Calu3 (cell line): ENCODE measurements at regions of chr18 and their contacts with region 1.

Region 1: GRCh38 chr18:9683407-9684396 is 24.4 kb upstream of the RAB31 start:
- DNase-seq: peak; percentile 75
- H3K4me3 Mint-ChIP-seq: no peak overlapping the region
- H3K27ac Mint-ChIP-seq: no peak overlapping the region
- H3K4me1 Mint-ChIP-seq: peaks cover 14% of the 10 kb centered on the region
- H3K27me3 Mint-ChIP-seq: no peaks in the 10 kb centered on the region
- CTCF ChIP-seq: peak; percentile 48

Region 2: DNA sequence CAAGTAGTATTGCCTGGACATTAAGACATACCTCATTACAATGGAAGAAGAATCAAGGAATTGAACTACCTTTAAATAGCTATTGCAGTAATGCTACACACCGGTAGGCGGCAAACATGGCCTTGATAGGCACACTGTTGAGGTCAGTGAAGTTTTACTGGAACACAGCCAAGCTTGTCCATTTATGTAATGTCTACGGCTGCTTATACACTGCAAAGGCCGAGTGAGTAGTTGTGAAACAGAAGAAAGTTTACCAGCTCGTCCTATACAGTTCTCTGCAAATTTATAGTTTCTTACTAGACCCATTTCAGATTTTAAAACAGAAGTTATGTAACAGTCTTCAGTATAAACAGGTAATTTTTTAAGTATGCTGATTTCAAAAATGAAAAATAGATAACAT is 108.1 kb before region 1 on chr18:
- CTCF ChIA-PET with region 1: interaction called, 29 read pairs
- intact Hi-C with region 1: loop called (anchors 1 kb)
- DNase-seq: peak; percentile 84
- H3K4me3 Mint-ChIP-seq: no peak overlapping the region
- H3K27ac Mint-ChIP-seq: peak overlapping the region; percentile 42
- H3K4me1 Mint-ChIP-seq: peaks cover 12% of the 10 kb centered on the region
- H3K27me3 Mint-ChIP-seq: no peaks in the 10 kb centered on the region
- CTCF ChIP-seq: peak; percentile 84

Region 3: GRCh38 chr18:9612215-9612830 is 71.4 kb before region 1 on chr18:
- CTCF ChIA-PET with region 1: interaction called, 8 read pairs
- intact Hi-C with region 1: loop called (anchors 1 kb)
- DNase-seq: peak; percentile 56
- H3K4me3 Mint-ChIP-seq: peak overlapping the region; percentile 99
- H3K27ac Mint-ChIP-seq: peak overlapping the region; percentile 97
- H3K4me1 Mint-ChIP-seq: peaks cover 54% of the 10 kb centered on the region
- H3K27me3 Mint-ChIP-seq: no peaks in the 10 kb centered on the region
- CTCF ChIP-seq: peak; percentile 57

Region 4: DNA sequence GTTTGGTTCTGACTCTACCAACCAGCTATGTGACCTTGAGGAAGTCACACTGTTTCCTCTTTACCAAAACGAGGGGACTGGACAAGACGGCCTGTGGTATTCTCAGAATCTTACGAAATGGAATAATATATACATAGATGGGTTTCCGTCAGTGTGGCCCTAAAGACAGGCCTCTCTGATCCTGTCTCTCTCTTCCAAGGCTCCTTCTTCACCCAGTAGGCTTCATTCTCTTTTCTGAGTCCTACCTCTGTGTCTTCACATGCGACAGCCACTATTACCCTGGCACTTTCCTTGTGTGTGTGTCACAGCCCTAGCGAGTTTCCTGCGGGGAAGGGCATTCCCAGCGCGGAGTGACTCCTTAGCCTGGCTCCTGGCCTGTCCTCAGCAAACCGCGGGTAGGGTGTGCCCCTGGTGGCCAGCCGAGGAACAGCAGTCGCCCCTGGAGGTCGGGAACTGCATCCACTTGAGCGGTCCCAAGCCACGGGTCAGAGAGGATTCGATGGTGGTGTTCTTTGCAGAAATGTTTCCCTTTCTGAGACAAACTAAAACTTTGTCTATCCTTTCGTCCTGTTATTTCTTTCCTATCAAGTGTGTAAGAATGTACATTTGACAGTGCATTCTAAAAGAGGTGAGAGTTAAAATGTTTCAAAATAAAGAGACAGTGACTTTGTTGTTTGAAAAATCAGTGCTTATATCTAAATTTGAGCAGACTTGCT is 87.7 kb after region 1 on chr18:
- CTCF ChIA-PET with region 1: no interaction called
- intact Hi-C with region 1: loop called (anchors 1 kb)
- DNase-seq: peak; percentile 92
- H3K4me3 Mint-ChIP-seq: no peak overlapping the region
- H3K27ac Mint-ChIP-seq: no peak overlapping the region
- H3K4me1 Mint-ChIP-seq: peaks cover 9% of the 10 kb centered on the region
- H3K27me3 Mint-ChIP-seq: peaks cover 14% of the 10 kb centered on the region
- CTCF ChIP-seq: peak; percentile 97

Region 5: GRCh38 chr18:9861157-9861556 is 177.5 kb after region 1 on chr18:
- CTCF ChIA-PET with region 1: no interaction called
- intact Hi-C with region 1: no loop called
- DNase-seq: no peak
- H3K4me3 Mint-ChIP-seq: no peak overlapping the region
- H3K27ac Mint-ChIP-seq: no peak overlapping the region
- H3K4me1 Mint-ChIP-seq: peaks cover 10% of the 10 kb centered on the region
- H3K27me3 Mint-ChIP-seq: no peaks in the 10 kb centered on the region
- CTCF ChIP-seq: no peak